HEK293T (cell line): ENCODE measurements at regions of chr4 and their contacts with region 1.

Region 1: DNA sequence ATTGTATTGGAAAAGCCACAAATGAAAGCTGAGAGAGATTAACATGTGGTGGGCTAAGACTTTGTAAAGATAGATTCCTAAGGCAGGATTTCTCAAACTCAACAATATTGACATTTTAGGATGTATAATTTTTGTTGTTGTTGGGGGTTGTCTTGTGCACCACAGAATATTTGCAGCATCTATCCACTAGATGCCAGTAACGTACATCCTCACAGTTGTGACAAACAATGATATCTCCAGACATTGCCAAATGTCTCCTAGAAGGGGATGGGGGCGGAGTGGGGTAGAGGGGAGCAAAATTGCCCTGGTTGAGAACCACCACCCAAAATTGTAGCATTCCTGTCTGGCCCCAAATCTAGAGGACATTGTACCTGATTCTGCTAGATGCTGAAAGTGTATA is 14.7 kb upstream of the CBR4 start:
- DNase-seq: peak; percentile 36

Region 2: DNA sequence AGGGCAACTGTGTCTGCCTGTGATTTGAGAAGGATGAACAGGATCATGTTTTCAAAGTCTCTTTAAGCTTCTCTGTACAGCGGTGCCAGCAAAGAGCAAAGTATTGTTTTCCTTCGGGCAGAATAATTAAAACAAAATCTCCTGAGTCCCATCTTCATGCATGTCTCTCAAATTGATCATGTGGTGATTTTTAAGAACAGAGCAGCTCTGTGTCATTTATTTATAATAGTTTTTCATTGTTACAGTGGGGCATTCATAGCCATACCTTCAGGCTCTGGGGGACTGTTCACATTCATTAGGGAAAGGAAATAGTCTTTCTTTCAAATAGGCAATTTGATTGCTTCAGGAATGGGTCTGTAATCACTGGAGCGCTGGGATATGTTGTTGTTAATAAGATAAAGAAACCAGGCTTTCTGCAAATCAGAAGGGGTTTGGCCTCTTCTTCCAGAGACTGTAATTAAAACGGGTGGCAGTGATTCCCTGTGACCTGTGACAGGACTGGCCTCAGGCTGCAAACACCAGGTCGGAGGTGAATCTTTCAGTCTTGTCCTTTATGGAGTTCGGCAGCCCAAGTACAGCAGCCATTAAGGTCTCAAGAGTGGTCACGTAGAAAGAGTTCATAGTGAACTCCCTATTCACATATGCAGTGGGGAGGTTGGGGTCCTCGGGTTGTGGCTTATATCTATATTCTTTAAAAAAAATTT is 14.6 kb after region 1 on chr4:
- CTCF ChIA-PET with region 1: no interaction called
- POLR2A ChIA-PET with region 1: no interaction called
- DNase-seq: no peak

Region 3: DNA sequence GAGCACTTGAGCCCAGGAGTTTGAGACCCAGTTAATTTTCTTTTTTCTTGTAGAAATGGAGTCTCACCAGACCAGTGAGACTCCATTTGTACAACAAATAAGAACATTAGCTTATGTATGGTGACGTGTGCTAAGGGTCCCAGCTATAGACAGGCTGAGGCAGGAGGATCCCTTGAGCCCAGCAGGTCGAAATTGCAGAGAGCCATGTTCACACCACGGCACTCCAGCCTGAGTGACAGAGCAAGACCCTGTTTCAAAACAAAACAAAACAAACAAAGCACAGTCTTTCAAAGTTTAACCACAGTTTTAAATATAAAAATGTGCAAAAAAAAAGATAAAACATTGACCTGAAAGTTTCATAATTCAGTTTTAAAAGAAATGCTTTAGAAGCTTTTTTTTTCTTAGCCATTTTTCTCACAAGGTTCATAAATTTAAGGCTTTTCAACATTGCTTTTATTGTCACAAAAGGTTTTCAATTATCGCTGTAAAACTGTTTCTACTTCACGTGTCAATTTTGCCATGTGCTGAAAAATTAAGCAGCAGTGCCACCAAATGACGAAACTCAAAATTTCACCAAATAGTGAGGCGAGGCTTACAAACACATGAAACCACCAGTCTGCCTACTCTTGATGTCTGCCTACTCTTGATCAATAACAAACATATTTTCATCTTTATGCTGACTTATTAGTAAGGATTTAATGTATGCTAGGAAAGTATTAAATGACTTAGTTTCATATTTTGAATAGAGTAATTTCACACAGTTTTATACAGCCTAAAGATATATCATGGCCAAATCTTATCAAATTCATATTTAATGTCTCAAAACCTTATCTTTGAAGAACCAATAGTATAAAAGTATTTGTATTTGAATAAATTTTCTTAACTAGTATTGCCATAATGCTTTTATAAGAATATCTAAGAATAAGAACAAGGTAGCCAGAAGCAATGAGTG is 461.3 kb after region 1 on chr4:
- CTCF ChIA-PET with region 1: interaction called, 10 read pairs
- POLR2A ChIA-PET with region 1: no interaction called
- DNase-seq: peak; percentile 51